ENCODE measurements at regions of chr10 and their contacts with region 1.

Region 1: DNA sequence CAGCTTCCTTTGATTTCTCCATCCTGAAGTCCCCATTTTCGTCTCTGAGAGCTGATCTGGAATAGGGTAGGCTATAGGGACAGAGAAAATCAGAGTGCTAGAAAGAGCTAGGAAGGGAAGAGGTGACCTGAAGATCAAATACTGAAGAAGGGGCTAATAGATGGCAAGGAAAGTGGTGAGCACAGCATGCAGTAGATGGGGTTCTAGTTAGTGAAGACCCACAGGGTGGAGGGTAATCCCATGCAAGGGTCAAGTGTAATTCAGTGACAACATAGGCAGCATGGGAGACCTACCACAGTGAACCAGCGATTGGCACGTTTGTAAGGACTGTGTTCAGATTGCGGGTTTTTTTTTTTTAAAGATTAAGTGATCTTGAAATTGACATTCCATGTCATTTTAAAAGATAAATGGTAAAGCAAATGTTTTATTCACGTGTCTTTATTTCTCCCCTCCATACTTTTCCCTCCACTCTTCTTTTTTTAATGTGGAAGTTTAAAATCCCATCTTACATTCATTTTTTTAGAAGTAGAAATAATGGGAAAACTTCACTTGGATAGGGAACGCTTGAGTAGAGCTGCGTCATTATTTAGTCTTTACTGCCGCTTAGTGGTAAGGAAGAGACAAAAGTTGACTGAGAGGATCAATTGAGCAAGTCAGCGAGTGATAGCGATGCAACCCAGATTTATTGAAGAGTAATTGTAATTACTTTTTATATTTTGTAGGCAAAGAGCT is 21.0 kb upstream of the ABI1 start:
- DNase-seq: no peak
- ATAC-seq: peak in 3 of 4 donors; percentile 69 to 94 (median 79)
- H3K4me3 ChIP-seq: no peak overlapping the region
- H3K27ac ChIP-seq: no peak overlapping the region
- H3K4me1 ChIP-seq: no peaks in the 10 kb centered on the region
- H3K27me3 ChIP-seq: peaks cover 0 to 6% (median 0%) of the 10 kb centered on the region in 3 donors
- CTCF ChIP-seq: peak; percentile 73

Region 2: GRCh38 chr10:26682931-26683330 is 198.8 kb before region 1 on chr10:
- intact Hi-C with region 1: loop called in 1 of 2 experiments (anchors 5 kb)
- DNase-seq: no peak
- ATAC-seq: no peak
- H3K4me3 ChIP-seq: no peak overlapping the region
- H3K27ac ChIP-seq: no peak overlapping the region
- H3K4me1 ChIP-seq: no peaks in the 10 kb centered on the region
- H3K27me3 ChIP-seq: no peaks in the 10 kb centered on the region
- CTCF ChIP-seq: no peak

Region 3: GRCh38 chr10:26725837-26726727 is 155.7 kb before region 1 on chr10:
- intact Hi-C with region 1: loop called (anchors 2 kb)
- DNase-seq: peak; percentile 59 to 77
- ATAC-seq: peak in 3 of 4 donors; percentile 36 to 83 (median 59)
- H3K4me3 ChIP-seq: no peak overlapping the region
- H3K27ac ChIP-seq: no peak overlapping the region
- H3K4me1 ChIP-seq: no peaks in the 10 kb centered on the region
- H3K27me3 ChIP-seq: no peaks in the 10 kb centered on the region
- CTCF ChIP-seq: peak; percentile 85